ENCODE measurements at regions of chr20 and their contacts with region 1.

Region 1: GRCh38 chr20:50460460-50461267 is 49.5 kb upstream of the PTPN1 start:
- DNase-seq: peak; percentile 87 to 97 (median 92)
- H3K4me3 ChIP-seq: no peak overlapping the region
- H3K27ac ChIP-seq: peak overlapping the region in 4 of 5 donors; percentile 28 to 87 (median 43)
- H3K4me1 ChIP-seq: peaks cover 12 to 18% of the 10 kb centered on the region in 2 donors
- H3K27me3 ChIP-seq: no peaks in the 10 kb centered on the region
- CTCF ChIP-seq: peak; percentile 92 to 99 (median 98)
- POLR2A ChIP-seq: no peak

Region 2: GRCh38 chr20:50308513-50309279 is 152.0 kb before region 1 on chr20:
- intact Hi-C with region 1: loop called in 1 of 2 experiments (anchors 10 kb)
- DNase-seq: peak; percentile 89 to 98 (median 97)
- H3K4me3 ChIP-seq: peak overlapping the region in 1 of 4 donors; percentile 7
- H3K27ac ChIP-seq: peak overlapping the region; percentile 89 to 98 (median 97)
- H3K4me1 ChIP-seq: peaks cover 49 to 59% of the 10 kb centered on the region in 2 donors
- H3K27me3 ChIP-seq: no peaks in the 10 kb centered on the region
- CTCF ChIP-seq: peak in 2 of 6 experiments; percentile 14 to 23
- POLR2A ChIP-seq: peak; percentile 45 to 51

Region 3: DNA sequence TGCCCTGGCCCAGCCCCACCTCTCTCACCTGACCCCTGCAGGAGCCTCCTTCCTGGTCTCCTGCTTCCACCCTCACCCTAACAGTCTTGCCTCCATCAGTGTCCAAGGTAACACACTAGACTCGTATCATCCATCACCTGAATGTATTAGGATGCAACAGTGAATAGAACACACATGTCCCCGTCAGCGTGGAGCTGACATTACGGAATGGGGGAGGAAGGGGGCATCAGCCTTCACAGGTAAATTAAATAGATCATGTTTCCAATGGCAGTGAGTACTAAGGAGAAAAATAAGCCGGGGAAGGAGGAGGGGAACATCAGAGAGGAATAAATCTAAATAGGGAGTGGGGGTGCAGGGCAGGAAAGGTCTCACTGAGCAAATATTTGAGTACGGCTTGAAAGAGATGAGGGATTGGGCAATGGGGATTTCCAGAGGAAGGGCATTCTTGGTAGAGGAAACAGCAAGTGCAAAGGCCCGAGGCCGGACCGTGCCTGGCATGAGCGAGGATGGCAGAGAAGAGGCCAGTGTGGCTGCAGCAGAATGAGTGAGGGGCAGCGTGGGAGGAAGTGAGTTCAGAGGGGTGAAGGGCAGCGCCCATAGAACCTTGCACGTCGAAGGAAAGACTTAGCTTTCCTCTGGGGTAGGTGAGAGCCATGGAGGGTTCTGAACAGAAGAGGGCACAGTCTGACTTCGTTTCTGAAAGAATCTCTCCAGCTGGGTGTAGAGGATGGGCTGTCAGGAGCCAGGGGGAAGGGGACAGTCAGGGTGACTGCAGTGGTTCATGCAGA is 60.6 kb before region 1 on chr20:
- intact Hi-C with region 1: loop called (anchors 5 to 10 kb)
- DNase-seq: no peak
- H3K4me3 ChIP-seq: no peak overlapping the region
- H3K27ac ChIP-seq: peak overlapping the region; percentile 75 to 94 (median 87)
- H3K4me1 ChIP-seq: peaks cover 57 to 59% of the 10 kb centered on the region in 2 donors
- H3K27me3 ChIP-seq: no peaks in the 10 kb centered on the region
- CTCF ChIP-seq: peak in 3 of 6 experiments; percentile 18 to 30 (median 24)
- POLR2A ChIP-seq: no peak

Measured in adrenal gland (tissue), 19 donors.